Activated B cell treated with CpG ODN at 0.5 μM for 24 hours (primary cell): ENCODE measurements at regions of chr12 and their contacts with region 1.

Region 1: GRCh38 chr12:96578526-96579125 is 89.2 kb downstream of the CFAP54 start:
- DNase-seq: no peak
- ATAC-seq: peak; percentile 50
- H3K4me3 Mint-ChIP-seq: no peak overlapping the region
- H3K27ac Mint-ChIP-seq: no peak overlapping the region
- H3K4me1 Mint-ChIP-seq: peaks cover 4% of the 10 kb centered on the region
- H3K27me3 Mint-ChIP-seq: no peaks in the 10 kb centered on the region
- CTCF ChIP-seq: no peak

Region 2: DNA sequence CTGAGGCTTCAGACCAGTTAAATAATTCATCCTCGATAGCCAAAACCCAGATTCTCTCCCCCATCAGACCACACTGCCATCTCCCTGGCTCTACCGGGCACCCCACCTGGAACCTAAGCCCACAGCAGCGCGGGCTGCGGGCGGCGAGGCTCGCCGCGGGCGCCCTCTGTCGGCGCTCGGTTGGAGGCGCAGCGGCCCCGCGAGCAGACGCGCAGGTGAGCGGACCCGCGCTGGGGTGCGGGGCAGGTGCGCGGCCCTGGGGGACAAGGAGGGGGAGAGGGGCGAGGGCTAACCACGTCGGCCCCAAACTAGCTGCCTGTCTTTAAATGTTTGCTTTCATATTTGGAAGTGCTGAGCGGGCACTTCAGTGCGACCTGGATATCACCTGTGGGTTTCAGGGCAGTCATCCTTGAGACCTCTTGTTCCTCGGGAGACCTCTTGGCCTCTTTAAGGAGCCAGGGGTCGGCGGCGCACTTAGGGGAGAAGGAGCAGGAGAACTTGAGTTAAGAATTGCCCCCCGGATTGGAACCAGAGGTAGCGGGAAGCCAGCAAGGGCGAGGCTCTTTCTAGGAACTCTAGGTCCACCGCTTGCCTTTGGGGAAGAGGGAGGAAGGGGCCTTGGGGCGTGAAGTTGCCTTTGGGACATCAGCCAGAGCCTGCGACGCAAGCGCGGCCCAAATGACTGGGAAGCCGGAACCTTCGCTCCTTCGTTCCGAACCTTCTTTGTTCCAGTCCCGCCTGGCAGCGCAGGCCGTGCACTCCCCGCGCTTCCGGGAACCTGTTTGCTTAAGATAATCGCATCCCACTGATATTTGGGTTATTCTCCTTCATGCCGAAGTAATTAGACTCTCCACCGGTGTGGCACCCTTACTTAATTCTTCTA is 407.1 kb after region 1 on chr12:
- CTCF ChIA-PET with region 1: interaction called, 7 read pairs
- POLR2A ChIA-PET with region 1: no interaction called
- intact Hi-C with region 1: loop called (anchors 1 kb)
- DNase-seq: peak; percentile 37
- ATAC-seq: peak; percentile 87
- H3K4me3 Mint-ChIP-seq: peak overlapping the region; percentile 66
- H3K27ac Mint-ChIP-seq: no peak overlapping the region
- H3K4me1 Mint-ChIP-seq: peaks cover 6% of the 10 kb centered on the region
- H3K27me3 Mint-ChIP-seq: peaks cover 6% of the 10 kb centered on the region
- CTCF ChIP-seq: peak; percentile 93

Region 3: GRCh38 chr12:97308576-97309198 is 730.1 kb after region 1 on chr12:
- CTCF ChIA-PET with region 1: interaction called, 9 read pairs
- POLR2A ChIA-PET with region 1: interaction called, 3 read pairs
- intact Hi-C with region 1: loop called (anchors 1 kb)
- DNase-seq: no peak
- ATAC-seq: peak; percentile 49
- H3K4me3 Mint-ChIP-seq: no peak overlapping the region
- H3K27ac Mint-ChIP-seq: no peak overlapping the region
- H3K4me1 Mint-ChIP-seq: peaks cover 22% of the 10 kb centered on the region
- H3K27me3 Mint-ChIP-seq: peaks cover 23% of the 10 kb centered on the region
- CTCF ChIP-seq: peak; percentile 59

Region 4: GRCh38 chr12:97960754-97961608 is 1382.4 kb after region 1 on chr12:
- CTCF ChIA-PET with region 1: interaction called, 9 read pairs
- POLR2A ChIA-PET with region 1: no interaction called
- intact Hi-C with region 1: loop called (anchors 1 kb)
- DNase-seq: no peak
- ATAC-seq: peak; percentile 21
- H3K4me3 Mint-ChIP-seq: no peak overlapping the region
- H3K27ac Mint-ChIP-seq: no peak overlapping the region
- H3K4me1 Mint-ChIP-seq: no peaks in the 10 kb centered on the region
- H3K27me3 Mint-ChIP-seq: peaks cover 2% of the 10 kb centered on the region
- CTCF ChIP-seq: no peak

Region 5: DNA sequence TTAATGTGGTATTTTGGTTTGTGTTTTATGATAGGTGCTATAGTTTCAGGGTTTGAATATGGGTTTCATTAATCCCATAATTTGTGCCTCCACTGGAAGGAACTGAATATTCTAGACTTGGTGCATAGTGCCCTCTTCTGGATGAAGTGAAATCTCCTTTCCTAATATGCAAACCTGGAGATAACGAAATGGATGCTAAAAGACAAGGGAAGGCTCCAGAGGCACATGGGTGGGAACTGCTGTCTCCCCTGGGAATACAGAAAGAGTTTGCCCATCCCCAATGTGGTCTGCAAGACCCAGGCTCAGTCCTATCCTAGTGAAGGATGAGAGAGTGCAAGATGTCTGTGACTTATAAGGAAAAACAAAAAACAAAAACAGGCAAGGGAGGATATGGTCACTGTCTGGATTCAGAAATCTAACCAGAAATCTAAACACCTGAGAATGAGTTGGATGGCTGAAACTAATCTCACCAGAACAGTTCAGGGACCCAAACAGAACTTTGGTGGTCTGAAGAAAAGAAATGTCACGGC is 1794.5 kb after region 1 on chr12:
- CTCF ChIA-PET with region 1: no interaction called
- POLR2A ChIA-PET with region 1: no interaction called
- intact Hi-C with region 1: loop called (anchors 1 kb)
- DNase-seq: no peak
- ATAC-seq: no peak
- H3K4me3 Mint-ChIP-seq: no peak overlapping the region
- H3K27ac Mint-ChIP-seq: no peak overlapping the region
- H3K4me1 Mint-ChIP-seq: no peaks in the 10 kb centered on the region
- H3K27me3 Mint-ChIP-seq: peaks cover 8% of the 10 kb centered on the region
- CTCF ChIP-seq: no peak

Region 6: GRCh38 chr12:98516184-98516873 is 1937.7 kb after region 1 on chr12:
- CTCF ChIA-PET with region 1: no interaction called
- POLR2A ChIA-PET with region 1: no interaction called
- intact Hi-C with region 1: loop called (anchors 10 kb)
- DNase-seq: peak; percentile 71
- ATAC-seq: peak; percentile 63
- H3K4me3 Mint-ChIP-seq: peak overlapping the region; percentile 98
- H3K27ac Mint-ChIP-seq: peak overlapping the region; percentile 97
- H3K4me1 Mint-ChIP-seq: peaks cover 61% of the 10 kb centered on the region
- H3K27me3 Mint-ChIP-seq: no peaks in the 10 kb centered on the region
- CTCF ChIP-seq: no peak